H1 (cell line): ENCODE measurements at regions of chr6 and their contacts with region 1.

Region 1: GRCh38 chr6:158744986-158745430 is 74.2 kb downstream of the EZR start:
- DNase-seq: no peak
- H3K4me3 ChIP-seq: no peak overlapping the region
- H3K27ac ChIP-seq: no peak overlapping the region
- H3K4me1 ChIP-seq: no peaks in the 10 kb centered on the region
- H3K27me3 ChIP-seq: no peaks in the 10 kb centered on the region
- CTCF ChIP-seq: no peak
- EP300 ChIP-seq: no peak
- POLR2A ChIP-seq: no peak
- RAD21 ChIP-seq: no peak

Region 2: GRCh38 chr6:158758451-158758861 is 13.4 kb after region 1 on chr6:
- CTCF ChIA-PET with region 1: interaction called, 8 read pairs
- POLR2A ChIA-PET with region 1: interaction called, 11 read pairs
- DNase-seq: peak; percentile 34 to 71
- H3K4me3 ChIP-seq: no peak overlapping the region
- H3K27ac ChIP-seq: no peak overlapping the region
- H3K4me1 ChIP-seq: peaks cover 0 to 20% (median 10%) of the 10 kb centered on the region in 4 experiments; a peak in 6 of 7 replicates
- H3K27me3 ChIP-seq: no peaks in the 10 kb centered on the region
- CTCF ChIP-seq: no peak
- EP300 ChIP-seq: no peak
- POLR2A ChIP-seq: no peak
- RAD21 ChIP-seq: no peak

Region 3: GRCh38 chr6:159416891-159417560 is 672.0 kb after region 1 on chr6:
- CTCF ChIA-PET with region 1: no interaction called
- POLR2A ChIA-PET with region 1: no interaction called
- DNase-seq: no peak
- H3K4me3 ChIP-seq: no peak overlapping the region
- H3K27ac ChIP-seq: no peak overlapping the region
- H3K4me1 ChIP-seq: no peaks in the 10 kb centered on the region; a peak in 1 of 7 replicates
- H3K27me3 ChIP-seq: no peaks in the 10 kb centered on the region
- CTCF ChIP-seq: no peak
- EP300 ChIP-seq: no peak
- POLR2A ChIP-seq: no peak
- RAD21 ChIP-seq: no peak